SK-N-SH (cell line): ENCODE measurements at regions of chr19 and their contacts with region 1.

Region 1: DNA sequence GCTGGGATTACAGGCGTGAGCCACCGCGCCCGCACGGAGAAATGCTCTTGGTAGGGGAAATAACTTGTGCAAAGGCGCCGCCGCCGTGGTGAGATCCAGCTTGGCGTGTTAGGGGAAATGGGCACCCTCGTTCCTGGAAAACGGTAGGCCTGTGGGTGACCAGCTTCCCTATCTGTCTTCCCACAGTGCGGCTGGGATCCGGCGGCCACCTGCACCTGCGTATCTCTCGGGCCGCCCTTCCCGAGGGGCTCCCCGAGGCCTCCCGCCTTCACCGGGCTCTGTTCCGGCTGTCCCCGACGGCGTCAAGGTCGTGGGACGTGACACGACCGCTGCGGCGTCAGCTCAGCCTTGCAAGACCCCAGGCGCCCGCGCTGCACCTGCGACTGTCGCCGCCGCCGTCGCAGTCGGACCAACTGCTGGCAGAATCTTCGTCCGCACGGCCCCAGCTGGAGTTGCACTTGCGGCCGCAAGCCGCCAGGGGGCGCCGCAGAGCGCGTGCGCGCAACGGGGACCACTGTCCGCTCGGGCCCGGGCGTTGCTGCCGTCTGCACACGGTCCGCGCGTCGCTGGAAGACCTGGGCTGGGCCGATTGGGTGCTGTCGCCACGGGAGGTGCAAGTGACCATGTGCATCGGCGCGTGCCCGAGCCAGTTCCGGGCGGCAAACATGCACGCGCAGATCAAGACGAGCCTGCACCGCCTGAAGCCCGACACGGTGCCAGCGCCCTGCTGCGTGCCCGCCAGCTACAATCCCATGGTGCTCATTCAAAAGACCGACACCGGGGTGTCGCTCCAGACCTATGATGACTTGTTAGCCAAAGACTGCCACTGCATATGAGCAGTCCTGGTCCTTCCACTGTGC is 2.4 kb downstream of the GDF15 start:
- DNase-seq: peak; percentile 98
- H3K4me3 ChIP-seq: peak overlapping the region; percentile 51 to 60; a peak in 3 of 4 replicates
- H3K27ac ChIP-seq: no peak overlapping the region
- H3K4me1 ChIP-seq: peaks cover 0 to 9% of the 10 kb centered on the region in 2 experiments; a peak in 1 of 4 replicates
- H3K27me3 ChIP-seq: no peaks in the 10 kb centered on the region
- CTCF ChIP-seq: peak; percentile 85
- EP300 ChIP-seq: no peak
- RAD21 ChIP-seq: peak; percentile 59

Region 2: GRCh38 chr19:18328340-18329034 is 59.8 kb before region 1 on chr19:
- CTCF ChIA-PET with region 1: interaction called, 10 read pairs
- POLR2A ChIA-PET with region 1: no interaction called
- DNase-seq: peak; percentile 94
- H3K4me3 ChIP-seq: peak overlapping the region; percentile 39 to 52
- H3K27ac ChIP-seq: peak overlapping the region; percentile 63 to 84
- H3K4me1 ChIP-seq: peaks cover 10 to 14% of the 10 kb centered on the region in 2 experiments; a peak in 2 of 4 replicates
- H3K27me3 ChIP-seq: no peaks in the 10 kb centered on the region
- CTCF ChIP-seq: peak; percentile 93
- EP300 ChIP-seq: peak in 1 of 2 experiments; percentile 53; a peak in 2 of 4 replicates
- RAD21 ChIP-seq: peak; percentile 90

Region 3: GRCh38 chr19:18349524-18350128 is 38.7 kb before region 1 on chr19:
- CTCF ChIA-PET with region 1: interaction called, 83 read pairs
- POLR2A ChIA-PET with region 1: no interaction called
- DNase-seq: peak; percentile 84
- H3K4me3 ChIP-seq: no peak overlapping the region
- H3K27ac ChIP-seq: no peak overlapping the region
- H3K4me1 ChIP-seq: no peaks in the 10 kb centered on the region
- H3K27me3 ChIP-seq: no peaks in the 10 kb centered on the region
- CTCF ChIP-seq: peak; percentile 96
- EP300 ChIP-seq: no peak
- RAD21 ChIP-seq: peak; percentile 95

Region 4: DNA sequence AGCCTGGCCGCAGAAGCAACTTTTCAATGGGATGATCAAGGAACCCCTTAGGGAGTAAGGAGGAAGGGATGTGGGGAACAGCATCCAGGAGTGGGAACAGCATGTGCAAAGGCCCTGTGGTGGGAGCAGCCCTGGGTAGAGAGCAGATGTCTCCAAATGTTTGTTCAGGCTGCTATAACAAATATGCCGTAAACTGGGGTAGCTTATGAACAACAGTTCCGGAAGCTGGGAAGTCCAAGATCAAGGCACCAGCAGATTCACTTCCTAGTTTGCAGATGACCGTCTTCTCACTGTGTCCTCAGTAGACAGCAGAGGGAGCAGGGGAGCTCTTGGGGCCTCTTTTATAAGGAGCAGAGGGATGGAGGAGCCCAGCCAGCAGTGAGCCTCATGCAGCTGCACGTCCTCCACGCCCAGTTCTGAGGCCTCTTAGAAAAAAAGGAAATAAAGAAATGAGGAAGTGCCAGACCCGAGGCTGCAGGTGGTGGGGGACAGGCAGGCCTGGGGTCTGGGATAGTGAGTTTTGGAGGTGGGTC is 13.3 kb after region 1 on chr19:
- CTCF ChIA-PET with region 1: interaction called, 25 read pairs
- POLR2A ChIA-PET with region 1: no interaction called
- DNase-seq: no peak
- H3K4me3 ChIP-seq: no peak overlapping the region
- H3K27ac ChIP-seq: no peak overlapping the region
- H3K4me1 ChIP-seq: no peaks in the 10 kb centered on the region
- H3K27me3 ChIP-seq: no peaks in the 10 kb centered on the region
- CTCF ChIP-seq: peak; percentile 31; the same call in 1 of the 2 replicates
- EP300 ChIP-seq: no peak
- RAD21 ChIP-seq: no peak

Region 5: DNA sequence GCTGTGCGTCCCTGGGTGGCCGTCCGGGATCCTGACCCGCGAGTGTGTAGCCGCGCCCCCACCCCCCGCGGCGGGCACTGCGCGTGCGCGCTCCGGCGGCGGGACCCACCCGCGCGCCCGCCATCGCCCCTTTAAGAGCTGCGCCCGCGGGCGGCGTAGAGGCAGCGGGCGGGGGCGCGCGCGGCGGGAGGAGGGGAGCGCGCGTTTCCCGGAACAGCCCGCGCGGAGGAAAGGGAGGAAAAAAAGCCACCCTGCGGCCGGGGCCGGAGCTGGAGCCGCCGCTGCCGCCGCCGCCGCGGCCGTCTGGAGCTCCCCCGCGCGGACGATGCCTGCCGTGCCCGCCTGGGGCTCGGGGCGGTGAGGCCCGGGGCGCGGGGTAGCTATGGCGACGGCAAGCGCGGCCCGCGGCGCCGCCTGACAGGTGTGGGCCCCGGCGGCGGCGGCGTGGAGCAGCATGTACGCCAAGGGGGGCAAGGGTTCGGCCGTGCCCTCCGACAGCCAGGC is 30.9 kb after region 1 on chr19 and contains the start of gene SSBP4:
- CTCF ChIA-PET with region 1: interaction called, 160 read pairs
- POLR2A ChIA-PET with region 1: interaction called, 3 read pairs
- DNase-seq: peak; percentile 97
- H3K4me3 ChIP-seq: peak within 1 kb of the TSS; percentile 68 to 74
- H3K27ac ChIP-seq: peak within 1 kb of the TSS; percentile 89 to 93; a peak in 3 of 4 replicates
- H3K4me1 ChIP-seq: peaks cover 41 to 53% of the 10 kb centered on the region in 2 experiments; a peak in 3 of 4 replicates
- H3K27me3 ChIP-seq: no peaks in the 10 kb centered on the region
- CTCF ChIP-seq: peak; percentile 12; the same call in 1 of the 2 replicates
- EP300 ChIP-seq: peak; percentile 59 to 65; a peak in 2 of 4 replicates
- RAD21 ChIP-seq: no peak
- polyA plus RNA-seq, gene SSBP4: 22.5 and 24.9 TPM in 2 replicates

Region 6: GRCh38 chr19:18551637-18552036 is 163.3 kb after region 1 on chr19:
- CTCF ChIA-PET with region 1: no interaction called
- POLR2A ChIA-PET with region 1: no interaction called
- DNase-seq: no peak
- H3K4me3 ChIP-seq: no peak overlapping the region
- H3K27ac ChIP-seq: no peak overlapping the region
- H3K4me1 ChIP-seq: no peaks in the 10 kb centered on the region
- H3K27me3 ChIP-seq: no peaks in the 10 kb centered on the region
- CTCF ChIP-seq: no peak
- EP300 ChIP-seq: no peak
- RAD21 ChIP-seq: no peak